ENCODE measurements at regions of chr16 and their contacts with region 1.

Region 1: GRCh38 chr16:30183233-30184095 is at the start of gene CORO1A:
- DNase-seq: peak; percentile 68 to 90 (median 82)
- ATAC-seq: peak; percentile 45
- H3K4me3 ChIP-seq: peak within 1 kb of the TSS; percentile 100
- H3K4me3 Mint-ChIP-seq: peak within 1 kb of the TSS; percentile 99
- H3K27ac ChIP-seq: peak within 1 kb of the TSS; percentile 89 to 96
- H3K27ac Mint-ChIP-seq: peak within 1 kb of the TSS; percentile 98
- H3K4me1 ChIP-seq: peaks cover 51% of the 10 kb centered on the region
- H3K4me1 Mint-ChIP-seq: peaks cover 39% of the 10 kb centered on the region
- H3K27me3 ChIP-seq: no peaks in the 10 kb centered on the region
- H3K27me3 Mint-ChIP-seq: no peaks in the 10 kb centered on the region
- CTCF ChIP-seq: no peak
- total RNA-seq, gene CORO1A: 411 to 416 TPM

Region 2: GRCh38 chr16:30075507-30076275 is 107.8 kb before region 1 on chr16 and contains the start of gene PPP4C:
- CTCF ChIA-PET with region 1: no interaction called
- POLR2A ChIA-PET with region 1: interaction called, 32 read pairs
- intact Hi-C with region 1: no loop called
- DNase-seq: peak; percentile 79 to 96 (median 86)
- ATAC-seq: peak; percentile 87
- H3K4me3 ChIP-seq: peak within 1 kb of the TSS; percentile 98
- H3K4me3 Mint-ChIP-seq: peak within 1 kb of the TSS; percentile 98
- H3K27ac ChIP-seq: peak within 1 kb of the TSS; percentile 77 to 80
- H3K27ac Mint-ChIP-seq: peak within 1 kb of the TSS; percentile 96
- H3K4me1 ChIP-seq: peaks cover 38% of the 10 kb centered on the region
- H3K4me1 Mint-ChIP-seq: peaks cover 39% of the 10 kb centered on the region
- H3K27me3 ChIP-seq: no peaks in the 10 kb centered on the region
- H3K27me3 Mint-ChIP-seq: no peaks in the 10 kb centered on the region
- CTCF ChIP-seq: no peak
- total RNA-seq, gene PPP4C: 83.9 to 87.3 TPM

Region 3: GRCh38 chr16:30091474-30092372 is 91.7 kb before region 1 on chr16 and contains the start of gene TBX6:
- CTCF ChIA-PET with region 1: interaction called, 15 read pairs
- POLR2A ChIA-PET with region 1: interaction called, 163 read pairs
- intact Hi-C with region 1: no loop called
- DNase-seq: peak; percentile 85 to 96 (median 91)
- ATAC-seq: peak; percentile 80
- H3K4me3 ChIP-seq: peak within 1 kb of the TSS; percentile 67
- H3K4me3 Mint-ChIP-seq: peak within 1 kb of the TSS; percentile 88
- H3K27ac ChIP-seq: peak within 1 kb of the TSS; percentile 58 to 81
- H3K27ac Mint-ChIP-seq: peak within 1 kb of the TSS; percentile 95
- H3K4me1 ChIP-seq: peaks cover 72% of the 10 kb centered on the region
- H3K4me1 Mint-ChIP-seq: peaks cover 53% of the 10 kb centered on the region
- H3K27me3 ChIP-seq: no peaks in the 10 kb centered on the region
- H3K27me3 Mint-ChIP-seq: no peaks in the 10 kb centered on the region
- CTCF ChIP-seq: peak; percentile 78
- total RNA-seq, gene TBX6: 0.42 to 0.47 TPM

Region 4: DNA sequence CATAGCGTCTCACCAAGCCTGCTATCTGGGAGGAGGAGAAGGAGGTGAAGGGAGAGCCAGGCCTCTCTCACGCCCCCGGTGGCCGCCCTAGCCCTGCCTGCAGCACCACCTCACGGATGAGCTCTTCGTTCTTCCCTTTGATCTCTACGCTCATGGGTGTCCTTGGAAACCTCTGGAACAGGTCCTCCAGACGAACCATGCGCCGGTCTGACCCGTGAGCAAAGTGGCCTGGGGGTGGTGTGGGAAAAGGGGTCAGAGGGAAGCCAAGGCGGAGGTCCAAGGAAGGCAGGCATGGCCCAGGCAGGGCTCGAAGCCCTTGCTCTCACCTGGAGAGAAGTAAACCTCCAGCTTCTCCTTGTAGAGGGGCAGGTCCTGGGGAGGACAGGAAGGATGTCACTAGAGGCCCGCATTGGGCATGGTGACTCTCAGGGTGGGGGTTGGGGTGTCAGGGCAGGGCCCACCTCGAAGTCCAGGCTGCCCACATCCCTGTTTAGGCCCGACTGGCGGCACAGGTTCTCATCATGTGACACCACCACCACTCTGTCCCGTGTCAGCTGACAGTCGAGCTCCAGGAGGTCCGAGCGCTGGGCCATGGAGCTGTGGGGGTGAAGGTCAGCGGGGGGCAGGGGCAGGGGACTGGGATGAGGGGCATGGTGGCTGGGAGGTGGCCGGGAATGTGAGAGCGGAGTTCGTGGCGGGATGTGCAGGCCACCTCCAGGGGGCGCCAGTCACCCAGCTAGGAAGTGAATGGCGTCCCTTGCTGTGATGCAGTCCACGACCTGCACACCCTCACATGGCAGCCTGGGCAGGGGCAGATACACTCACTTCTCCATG is 71.0 kb before region 1 on chr16:
- CTCF ChIA-PET with region 1: interaction called, 4 read pairs
- POLR2A ChIA-PET with region 1: interaction called, 12 read pairs
- intact Hi-C with region 1: no loop called
- DNase-seq: peak in 12 of 14 experiments; percentile 35 to 77 (median 52)
- ATAC-seq: peak; percentile 52
- H3K4me3 ChIP-seq: no peak overlapping the region
- H3K4me3 Mint-ChIP-seq: no peak overlapping the region
- H3K27ac ChIP-seq: no peak overlapping the region
- H3K27ac Mint-ChIP-seq: no peak overlapping the region
- H3K4me1 ChIP-seq: peaks cover 40% of the 10 kb centered on the region
- H3K4me1 Mint-ChIP-seq: peaks cover 4% of the 10 kb centered on the region
- H3K27me3 ChIP-seq: no peaks in the 10 kb centered on the region
- H3K27me3 Mint-ChIP-seq: no peaks in the 10 kb centered on the region
- CTCF ChIP-seq: peak; percentile 71

Region 5: DNA sequence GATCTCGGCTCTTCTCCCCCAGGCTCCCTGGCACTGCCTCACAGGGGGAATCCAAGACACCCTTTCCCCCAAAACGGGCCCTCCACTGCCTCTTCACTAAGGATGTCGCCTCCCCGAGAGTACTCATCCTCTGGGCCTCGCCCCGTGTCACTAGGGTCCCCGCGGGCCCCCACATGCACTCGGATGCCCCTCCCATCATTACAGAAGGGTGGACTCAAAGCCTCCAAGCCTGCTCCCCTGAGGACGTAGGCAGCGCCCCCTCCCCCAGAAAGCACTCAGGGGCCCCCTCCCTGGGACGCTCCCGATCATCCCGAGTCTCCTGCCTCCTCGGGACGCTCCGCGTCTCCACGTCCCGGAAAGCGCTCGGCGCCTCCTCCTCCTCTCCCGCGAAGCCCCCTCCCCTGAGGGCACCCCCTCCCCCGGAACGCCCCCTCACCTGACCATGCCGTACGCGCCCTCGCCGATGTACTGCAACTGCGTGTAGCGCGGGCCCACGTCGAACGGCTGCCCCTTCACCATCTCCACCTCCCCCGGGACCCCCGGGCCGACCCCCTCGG is 60.8 kb before region 1 on chr16:
- CTCF ChIA-PET with region 1: no interaction called
- POLR2A ChIA-PET with region 1: interaction called, 17 read pairs
- intact Hi-C with region 1: no loop called
- DNase-seq: peak in 5 of 14 experiments; percentile 4 to 39 (median 26)
- ATAC-seq: peak; percentile 16
- H3K4me3 ChIP-seq: peak overlapping the region; percentile 92
- H3K4me3 Mint-ChIP-seq: peak overlapping the region; percentile 91
- H3K27ac ChIP-seq: peak overlapping the region; percentile 37 to 59
- H3K27ac Mint-ChIP-seq: peak overlapping the region; percentile 81
- H3K4me1 ChIP-seq: peaks cover 33% of the 10 kb centered on the region
- H3K4me1 Mint-ChIP-seq: peaks cover 28% of the 10 kb centered on the region
- H3K27me3 ChIP-seq: no peaks in the 10 kb centered on the region
- H3K27me3 Mint-ChIP-seq: no peaks in the 10 kb centered on the region
- CTCF ChIP-seq: no peak

Region 6: GRCh38 chr16:30142672-30143346 is 40.7 kb before region 1 on chr16:
- CTCF ChIA-PET with region 1: interaction called, 3 read pairs
- POLR2A ChIA-PET with region 1: interaction called, 15 read pairs
- intact Hi-C with region 1: no loop called
- DNase-seq: peak in 6 of 14 experiments; percentile 9 to 66 (median 43)
- ATAC-seq: peak; percentile 56
- H3K4me3 ChIP-seq: no peak overlapping the region
- H3K4me3 Mint-ChIP-seq: no peak overlapping the region
- H3K27ac ChIP-seq: no peak overlapping the region
- H3K27ac Mint-ChIP-seq: peak overlapping the region; percentile 69
- H3K4me1 ChIP-seq: peaks cover 20% of the 10 kb centered on the region
- H3K4me1 Mint-ChIP-seq: peaks cover 15% of the 10 kb centered on the region
- H3K27me3 ChIP-seq: no peaks in the 10 kb centered on the region
- H3K27me3 Mint-ChIP-seq: no peaks in the 10 kb centered on the region
- CTCF ChIP-seq: peak; percentile 28

Region 7: DNA sequence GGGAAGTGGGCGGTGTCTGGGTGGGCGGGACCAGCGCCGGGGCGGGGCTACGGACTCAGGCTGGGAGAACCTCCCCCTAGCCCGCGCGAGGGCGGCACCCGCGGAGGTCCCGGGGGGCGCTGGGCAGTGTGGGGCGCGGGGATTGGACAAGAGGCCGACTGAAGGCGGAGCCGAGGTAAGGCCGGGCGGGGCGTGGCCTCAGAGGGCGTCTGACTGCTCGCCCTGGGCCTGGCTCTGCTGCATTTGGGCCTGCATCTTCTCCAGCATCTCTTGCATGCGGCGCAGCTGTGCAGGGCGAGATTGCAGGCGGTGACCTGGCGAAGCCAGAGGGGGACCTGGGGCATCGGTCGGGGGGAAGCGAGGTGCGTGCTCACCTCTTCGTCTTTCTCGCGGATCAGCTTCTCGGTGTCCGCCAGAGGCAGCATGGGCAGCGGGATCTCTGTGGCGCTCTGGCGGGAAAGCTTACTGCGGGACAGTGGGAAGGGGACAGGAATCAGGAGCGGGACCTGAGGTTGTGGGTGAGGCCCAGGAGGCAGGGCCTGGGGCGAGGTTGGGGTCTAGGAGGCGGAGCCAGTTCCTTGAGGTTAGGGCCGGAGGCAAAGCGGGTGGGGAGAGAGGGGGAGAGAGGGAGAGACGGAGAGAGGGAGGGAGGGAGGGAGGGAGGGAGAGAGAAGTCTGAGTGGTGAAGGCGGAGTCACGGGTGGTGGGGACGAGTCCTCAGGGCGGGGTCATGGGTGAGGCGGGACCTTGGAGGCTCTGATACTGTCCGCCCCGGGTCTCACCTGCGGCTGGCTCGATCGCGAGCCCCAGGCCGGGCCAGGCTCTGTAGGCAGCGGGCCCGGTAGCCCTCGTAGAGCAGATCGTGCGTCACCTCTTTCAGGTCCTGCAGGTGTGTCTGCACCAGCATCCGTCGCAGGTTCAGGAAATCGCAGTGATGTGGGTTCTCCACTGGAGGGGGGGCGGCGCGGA is 195.1 kb after region 1 on chr16:
- CTCF ChIA-PET with region 1: no interaction called
- POLR2A ChIA-PET with region 1: interaction called, 14 read pairs
- intact Hi-C with region 1: no loop called
- DNase-seq: peak; percentile 98 to 100 (median 100)
- ATAC-seq: peak; percentile 74
- H3K4me3 ChIP-seq: peak overlapping the region; percentile 71
- H3K4me3 Mint-ChIP-seq: peak overlapping the region; percentile 99
- H3K27ac ChIP-seq: peak overlapping the region; percentile 100
- H3K27ac Mint-ChIP-seq: peak overlapping the region; percentile 100
- H3K4me1 ChIP-seq: peaks cover 79% of the 10 kb centered on the region
- H3K4me1 Mint-ChIP-seq: peaks cover 60% of the 10 kb centered on the region
- H3K27me3 ChIP-seq: no peaks in the 10 kb centered on the region
- H3K27me3 Mint-ChIP-seq: no peaks in the 10 kb centered on the region
- CTCF ChIP-seq: no peak

Region 8: GRCh38 chr16:31427441-31428278 is 1244.2 kb after region 1 on chr16:
- CTCF ChIA-PET with region 1: no interaction called
- POLR2A ChIA-PET with region 1: no interaction called
- intact Hi-C with region 1: no loop called
- DNase-seq: peak; percentile 26 to 91 (median 60)
- ATAC-seq: peak; percentile 75
- H3K4me3 ChIP-seq: peak overlapping the region; percentile 20
- H3K4me3 Mint-ChIP-seq: no peak overlapping the region
- H3K27ac ChIP-seq: no peak overlapping the region
- H3K27ac Mint-ChIP-seq: no peak overlapping the region
- H3K4me1 ChIP-seq: peaks cover 12% of the 10 kb centered on the region
- H3K4me1 Mint-ChIP-seq: no peaks in the 10 kb centered on the region
- H3K27me3 ChIP-seq: no peaks in the 10 kb centered on the region
- H3K27me3 Mint-ChIP-seq: peaks cover 4% of the 10 kb centered on the region
- CTCF ChIP-seq: no peak

Measured in CD4-positive, alpha-beta T cell (primary cell).